BJ (cell line): ENCODE measurements at regions of chr12 and their contacts with region 1.

Region 1: GRCh38 chr12:124767066-124767821 is 96.4 kb downstream of the SCARB1 start:
- DNase-seq: no peak
- H3K4me3 ChIP-seq: no peak overlapping the region
- H3K27me3 ChIP-seq: no peaks in the 10 kb centered on the region; the same call in 1 of the 2 replicates
- CTCF ChIP-seq: peak; percentile 98

Region 2: DNA sequence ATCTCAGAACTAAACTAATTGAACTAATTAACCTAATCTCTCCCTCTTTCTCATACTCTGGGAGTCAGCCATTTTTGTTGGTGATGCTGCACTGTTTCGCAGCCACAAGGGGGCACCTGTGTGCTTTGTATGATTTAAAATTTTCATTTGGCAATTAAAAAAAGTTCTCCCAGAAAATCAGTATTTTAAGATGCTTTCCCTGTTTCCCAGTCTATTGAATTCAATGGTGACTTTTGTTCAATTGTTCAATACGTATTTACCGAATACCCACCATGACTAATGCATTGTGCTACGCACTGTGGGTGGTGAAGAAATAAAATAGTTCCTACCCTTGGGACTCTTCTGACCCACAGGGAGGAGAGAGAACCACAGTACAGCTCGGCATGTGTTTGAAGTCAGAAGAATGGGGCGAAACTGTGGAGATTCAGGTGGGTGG is 730.6 kb before region 1 on chr12:
- CTCF ChIA-PET with region 1: interaction called, 20 read pairs
- POLR2A ChIA-PET with region 1: no interaction called
- DNase-seq: no peak
- H3K4me3 ChIP-seq: no peak overlapping the region
- H3K27me3 ChIP-seq: no peaks in the 10 kb centered on the region
- CTCF ChIP-seq: peak; percentile 87

Region 3: DNA sequence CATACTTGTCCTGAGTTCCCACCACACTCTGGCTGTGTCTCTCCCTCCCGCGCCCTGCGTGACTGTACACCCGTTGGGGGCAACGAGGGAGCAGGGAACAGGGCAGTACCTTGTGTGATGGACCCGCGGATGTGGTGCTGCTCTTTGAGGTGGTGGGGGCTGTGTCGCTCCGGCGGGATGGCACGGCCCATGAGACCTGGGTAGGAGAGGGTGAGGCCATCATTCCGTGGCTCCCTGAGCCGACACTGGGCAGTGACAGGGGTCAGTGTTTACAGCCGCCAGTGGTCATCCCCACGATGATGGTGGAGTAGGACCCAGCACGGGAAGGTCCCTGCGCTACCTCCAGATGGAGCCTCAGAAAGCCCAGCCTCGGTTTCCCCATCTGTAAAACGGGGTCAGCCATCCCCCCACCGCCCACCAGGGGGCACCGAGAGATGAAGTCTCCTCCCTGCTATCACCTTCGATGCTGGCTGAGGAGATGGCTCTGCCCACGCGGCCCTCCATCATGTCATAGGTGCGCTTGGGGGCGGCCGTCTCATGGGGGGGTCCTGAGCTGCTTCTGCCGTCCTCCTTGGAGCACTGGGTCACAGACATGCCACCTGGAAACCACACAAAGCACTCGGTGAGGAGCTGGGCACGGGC is 419.4 kb before region 1 on chr12:
- CTCF ChIA-PET with region 1: interaction called, 13 read pairs
- POLR2A ChIA-PET with region 1: no interaction called
- DNase-seq: no peak
- H3K4me3 ChIP-seq: no peak overlapping the region
- H3K27me3 ChIP-seq: no peaks in the 10 kb centered on the region
- CTCF ChIP-seq: peak; percentile 61

Region 4: GRCh38 chr12:124566161-124566996 is 200.9 kb before region 1 on chr12:
- CTCF ChIA-PET with region 1: interaction called, 29 read pairs
- POLR2A ChIA-PET with region 1: interaction called, 3 read pairs
- DNase-seq: no peak
- H3K4me3 ChIP-seq: peak overlapping the region; percentile 74
- H3K27me3 ChIP-seq: no peaks in the 10 kb centered on the region; the same call in 1 of the 2 replicates
- CTCF ChIP-seq: no peak

Region 5: DNA sequence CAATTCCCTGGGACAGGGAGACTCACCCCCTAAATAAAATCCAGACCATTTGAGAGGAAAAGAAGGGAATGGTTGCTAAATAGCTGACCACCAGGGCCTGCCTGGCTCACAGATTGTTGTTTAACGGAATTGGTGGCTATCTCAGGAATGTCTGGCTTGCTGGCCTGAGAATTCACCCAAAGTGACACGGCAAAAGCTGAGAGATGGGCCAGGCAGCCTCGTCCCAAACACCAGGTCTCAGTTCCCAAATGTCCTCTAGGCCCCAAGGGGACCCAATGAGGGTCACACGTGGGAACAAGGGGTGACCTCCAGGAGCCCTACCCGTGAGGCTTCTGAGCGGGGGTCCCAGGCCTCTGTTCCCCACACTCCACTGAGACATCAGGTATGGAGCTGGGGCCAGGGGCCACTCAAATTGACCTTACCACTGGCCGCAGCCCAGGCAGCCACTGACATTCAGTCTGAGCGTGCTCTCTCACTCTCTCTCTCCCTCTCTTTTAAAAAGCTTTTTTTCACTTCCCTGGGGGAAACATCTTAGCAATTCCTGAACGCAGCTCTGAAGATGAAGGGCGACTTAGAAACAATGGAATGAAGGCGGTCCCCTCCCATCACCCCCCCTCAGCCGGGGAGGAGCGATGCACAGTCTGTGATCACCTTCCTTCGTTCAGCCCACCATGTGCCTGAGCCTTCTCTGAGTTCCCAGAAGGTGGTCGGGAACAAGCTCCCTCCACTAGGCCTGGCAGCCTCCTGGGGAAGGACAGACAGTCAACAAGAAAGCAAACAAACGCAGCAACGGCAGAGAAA is 34.8 kb before region 1 on chr12:
- CTCF ChIA-PET with region 1: interaction called, 13 read pairs
- POLR2A ChIA-PET with region 1: no interaction called
- DNase-seq: peak; percentile 55
- H3K4me3 ChIP-seq: no peak overlapping the region
- H3K27me3 ChIP-seq: no peaks in the 10 kb centered on the region
- CTCF ChIP-seq: no peak

Region 6: DNA sequence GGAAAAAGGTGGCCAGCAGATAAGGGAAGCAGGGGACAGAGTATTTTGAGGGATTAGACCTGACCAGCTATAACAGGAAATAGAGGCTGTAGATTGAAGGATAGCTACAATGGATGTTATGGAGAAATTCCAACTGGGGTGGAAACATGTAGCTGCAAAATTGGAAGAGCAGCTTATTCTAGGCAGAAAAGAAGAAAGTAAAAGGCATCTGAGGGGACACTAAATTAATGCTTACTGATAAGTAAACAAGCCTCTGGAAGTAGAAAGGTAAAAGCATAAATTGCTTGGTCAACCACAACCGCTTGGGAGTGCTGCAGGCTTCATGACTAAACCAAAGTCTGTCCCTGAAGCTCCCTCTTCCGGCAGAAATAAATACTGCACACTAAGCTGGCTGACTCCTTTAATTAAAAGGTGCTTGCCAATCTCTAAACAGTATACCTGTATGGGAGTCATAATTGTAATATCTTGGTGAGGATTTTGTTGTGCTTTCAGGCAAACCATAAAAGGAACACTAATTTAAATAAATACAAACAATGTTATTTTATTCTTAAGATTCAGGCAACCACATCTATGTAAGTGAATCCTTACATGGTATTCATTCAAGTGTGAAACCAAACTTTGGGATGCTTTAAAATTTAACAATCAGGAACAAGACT is 139.5 kb after region 1 on chr12:
- CTCF ChIA-PET with region 1: interaction called, 17 read pairs
- POLR2A ChIA-PET with region 1: no interaction called
- DNase-seq: peak; percentile 61
- H3K4me3 ChIP-seq: no peak overlapping the region
- H3K27me3 ChIP-seq: no peaks in the 10 kb centered on the region
- CTCF ChIP-seq: peak; percentile 96